ENCODE measurements at regions of chr15 and their contacts with region 1.

Region 1: DNA sequence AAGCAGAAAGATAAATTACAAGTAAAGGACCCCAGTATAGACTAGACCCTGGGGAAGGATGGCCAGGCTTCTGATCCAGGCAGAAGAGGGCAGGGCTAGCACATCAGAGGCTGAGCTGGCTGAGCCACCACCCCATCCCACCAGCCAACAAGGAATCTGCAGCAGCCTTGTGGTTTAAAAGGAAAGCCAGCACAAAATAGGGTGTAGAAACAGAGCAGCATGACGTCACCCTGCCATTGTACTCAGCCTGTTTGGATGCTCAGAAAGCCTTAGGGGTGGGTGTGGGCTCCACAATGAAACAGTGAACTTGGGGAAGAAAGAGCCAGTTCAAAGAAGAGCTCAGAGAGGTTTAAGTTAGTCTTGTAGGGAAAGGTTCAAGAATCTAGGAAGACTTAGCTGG is 28.2 kb downstream of the DUOX1 start:
- DNase-seq: no peak
- ATAC-seq: no peak
- H3K4me3 ChIP-seq: no peak overlapping the region
- H3K27ac ChIP-seq: no peak overlapping the region
- H3K4me1 ChIP-seq: peaks cover 4% of the 10 kb centered on the region
- H3K27me3 ChIP-seq: no peaks in the 10 kb centered on the region
- CTCF ChIP-seq: no peak

Region 2: DNA sequence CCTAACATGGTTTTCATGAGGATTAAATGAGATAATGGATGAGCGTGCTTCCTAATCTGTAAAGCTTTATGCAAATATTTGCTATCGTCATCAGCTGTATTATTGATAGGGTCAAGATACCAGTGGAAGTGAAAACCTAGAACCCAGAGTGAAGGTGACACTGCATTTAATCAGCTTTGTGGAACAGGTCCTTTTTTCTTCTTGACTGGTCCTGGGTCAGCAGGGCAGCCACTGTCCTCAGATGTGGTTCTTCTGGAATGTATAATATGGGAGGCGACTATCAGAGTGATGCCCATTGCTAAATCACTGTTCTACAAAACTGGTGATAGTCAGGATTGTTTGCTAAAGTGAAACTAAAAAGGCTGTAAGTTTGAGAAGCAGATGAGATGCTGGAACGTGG is 93.6 kb before region 1 on chr15:
- CTCF ChIA-PET with region 1: interaction called, 10 read pairs
- POLR2A ChIA-PET with region 1: no interaction called
- in situ Hi-C with region 1: no loop called
- intact Hi-C with region 1: no loop called
- DNase-seq: no peak
- ATAC-seq: no peak
- H3K4me3 ChIP-seq: no peak overlapping the region
- H3K27ac ChIP-seq: no peak overlapping the region
- H3K4me1 ChIP-seq: no peaks in the 10 kb centered on the region
- H3K27me3 ChIP-seq: no peaks in the 10 kb centered on the region
- CTCF ChIP-seq: no peak

Measured in Panc1 (cell line).